Breast epithelium (tissue), 4 donors: ENCODE measurements at regions of chr4 and their contacts with region 1.

Region 1: DNA sequence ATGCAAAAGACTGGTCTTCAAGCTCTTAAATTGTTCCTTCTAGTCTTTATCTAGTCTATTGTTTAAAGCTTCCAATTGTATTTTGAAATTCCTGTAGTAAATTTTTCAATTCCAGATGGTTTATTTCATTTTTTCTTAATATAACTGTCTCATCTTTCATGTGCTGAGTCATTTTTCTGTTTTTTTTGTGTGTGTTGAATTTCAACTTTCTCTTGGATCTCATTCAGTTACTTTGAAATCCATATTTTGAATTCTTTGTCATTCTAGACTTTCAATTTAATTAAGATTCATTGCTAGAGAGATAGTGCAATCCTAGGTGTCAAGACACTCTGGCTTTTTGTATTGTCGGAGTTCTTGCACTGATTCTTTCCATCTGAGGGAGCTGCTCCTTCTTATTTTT is 128.0 kb upstream of the PRKG2 start:
- DNase-seq: no peak
- H3K4me3 ChIP-seq: no peak overlapping the region
- H3K27ac ChIP-seq: no peak overlapping the region
- H3K4me1 ChIP-seq: no peaks in the 10 kb centered on the region
- H3K27me3 ChIP-seq: no peaks in the 10 kb centered on the region
- CTCF ChIP-seq: no peak
- POLR2A ChIP-seq: no peak

Region 2: DNA sequence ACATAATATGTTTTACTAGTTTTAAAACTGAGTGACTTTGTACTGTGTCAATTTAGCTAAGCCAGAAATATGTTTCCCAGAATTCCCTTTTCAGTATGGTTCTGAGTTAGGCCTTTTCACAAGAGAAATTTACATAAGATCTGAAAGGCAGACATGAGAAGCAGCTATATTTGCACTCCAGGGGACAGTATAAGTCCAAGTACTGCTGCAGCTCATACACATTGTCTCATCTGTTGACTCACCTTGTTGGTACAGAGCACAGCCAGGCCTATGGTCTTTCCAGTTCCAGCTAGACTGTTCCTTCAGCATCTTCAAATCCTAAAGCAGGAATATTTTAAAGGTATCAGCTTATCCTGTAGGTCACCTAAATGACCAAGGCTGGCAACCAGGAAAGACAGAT is 259.0 kb before region 1 on chr4:
- intact Hi-C with region 1: loop called (anchors 10 kb)
- DNase-seq: no peak
- H3K4me3 ChIP-seq: no peak overlapping the region
- H3K27ac ChIP-seq: no peak overlapping the region
- H3K4me1 ChIP-seq: no peaks in the 10 kb centered on the region
- H3K27me3 ChIP-seq: no peaks in the 10 kb centered on the region
- CTCF ChIP-seq: no peak
- POLR2A ChIP-seq: no peak

Region 3: DNA sequence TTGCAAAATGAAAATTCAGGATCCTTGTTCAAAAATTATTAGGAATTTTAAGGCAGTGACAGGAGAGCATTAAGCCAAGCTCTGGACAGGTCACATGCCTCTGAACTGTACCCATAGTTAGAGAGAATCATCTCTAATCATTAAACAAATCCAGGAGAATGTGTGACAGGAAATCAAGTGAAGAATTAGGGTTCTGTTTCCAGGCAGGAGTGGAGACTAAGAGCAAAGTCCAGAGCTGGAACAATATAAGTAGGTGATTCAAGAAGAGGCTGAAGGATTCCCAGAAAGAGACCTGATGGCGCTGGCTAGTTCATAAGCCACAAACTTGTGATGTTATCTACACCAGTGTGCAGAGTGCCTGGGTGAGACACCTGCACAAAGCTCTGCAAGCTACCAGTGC is 23.4 kb before region 1 on chr4:
- intact Hi-C with region 1: no loop called
- DNase-seq: no peak
- H3K4me3 ChIP-seq: no peak overlapping the region
- H3K27ac ChIP-seq: no peak overlapping the region
- H3K4me1 ChIP-seq: no peaks in the 10 kb centered on the region
- H3K27me3 ChIP-seq: no peaks in the 10 kb centered on the region
- CTCF ChIP-seq: no peak
- POLR2A ChIP-seq: no peak